Dorsolateral prefrontal cortex (tissue), 120 donors: ENCODE measurements at regions of chr10 and their contacts with region 1.

Region 1: GRCh38 chr10:69716711-69717560 is 84.8 kb upstream of the COL13A1 start:
- DNase-seq: peak in 7 of 10 donors; percentile 35 to 65 (median 55)
- H3K4me3 ChIP-seq: no peak overlapping the region
- H3K27ac ChIP-seq: no peak overlapping the region
- H3K27me3 ChIP-seq: peaks cover 0 to 6% (median 0%) of the 10 kb centered on the region in 45 donors
- CTCF ChIP-seq: peak in 55 of 56 donors; percentile 42 to 78 (median 63)

Region 2: GRCh38 chr10:69515699-69516259 is 201.2 kb before region 1 on chr10:
- intact Hi-C with region 1: loop called in 1 of 2 experiments (anchors 10 kb)
- DNase-seq: peak in 8 of 10 donors; percentile 56 to 80 (median 75)
- H3K4me3 ChIP-seq: no peak overlapping the region
- H3K27ac ChIP-seq: no peak overlapping the region
- H3K27me3 ChIP-seq: no peaks in the 10 kb centered on the region
- CTCF ChIP-seq: peak; percentile 27 to 80 (median 67)

Region 3: GRCh38 chr10:69644658-69645295 is 72.2 kb before region 1 on chr10:
- intact Hi-C with region 1: loop called (anchors 2 kb)
- DNase-seq: peak in 8 of 10 donors; percentile 49 to 78 (median 70)
- H3K4me3 ChIP-seq: peak overlapping the region in 7 of 59 donors; percentile 0 to 25 (median 15)
- H3K27ac ChIP-seq: peak overlapping the region in 31 of 59 donors; percentile 2 to 85 (median 55)
- H3K27me3 ChIP-seq: peaks cover 0 to 4% (median 0%) of the 10 kb centered on the region in 45 donors
- CTCF ChIP-seq: peak; percentile 59 to 91 (median 84)